ENCODE measurements at regions of chr11 and their contacts with region 1.

Region 1: DNA sequence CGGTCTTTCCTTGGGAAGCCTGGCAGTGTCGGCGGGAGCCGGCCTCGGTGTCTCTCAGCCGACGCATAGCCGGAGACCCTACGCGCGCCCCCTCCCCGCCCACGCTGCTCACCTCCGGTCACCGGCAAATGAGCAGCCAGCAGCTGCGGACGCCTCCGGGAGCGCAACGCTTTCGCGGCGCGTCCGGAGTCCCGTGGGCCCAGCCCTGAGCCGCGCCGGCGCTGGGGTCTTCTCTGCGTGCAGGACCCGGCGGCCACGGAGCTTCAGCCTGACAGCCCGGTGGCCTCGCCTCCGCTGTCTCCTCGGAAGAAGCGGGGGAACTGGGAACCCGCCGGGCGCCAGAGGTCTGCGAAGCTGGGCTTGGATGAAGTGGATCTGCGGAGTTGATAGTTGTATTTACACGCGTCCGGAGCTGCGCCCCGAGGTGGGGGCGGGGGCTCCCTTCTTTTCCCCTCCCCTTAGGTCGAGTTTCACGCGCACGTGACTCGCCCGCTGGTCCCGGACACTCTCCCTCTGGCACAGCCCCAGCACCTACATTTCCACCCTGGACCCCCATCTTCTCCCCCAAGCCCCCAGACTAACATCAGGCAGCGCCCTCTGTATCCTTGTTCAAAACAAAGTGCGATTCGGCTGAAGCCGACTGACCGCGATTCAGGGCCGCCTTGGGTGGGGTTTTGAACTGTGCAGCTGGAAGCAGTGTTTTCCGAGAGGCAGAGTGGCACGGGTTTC is at the start of gene SLC43A1:
- DNase-seq: peak; percentile 69
- H3K4me3 ChIP-seq: peak within 1 kb of the TSS; percentile 64 to 79 (median 68)
- H3K27ac ChIP-seq: no peak within 1 kb of the TSS
- H3K4me1 ChIP-seq: peaks cover 9% of the 10 kb centered on the region
- H3K27me3 ChIP-seq: no peaks in the 10 kb centered on the region
- CTCF ChIP-seq: no peak
- POLR2A ChIP-seq: peak; percentile 25
- total RNA-seq, gene SLC43A1: 11.3 and 13.7 TPM in 2 replicates

Region 2: GRCh38 chr11:57499413-57499982 is 16.0 kb before region 1 on chr11:
- CTCF ChIA-PET with region 1: interaction called, 166 read pairs
- POLR2A ChIA-PET with region 1: interaction called, 4 read pairs
- dilution Hi-C with region 1: no loop called
- intact Hi-C with region 1: loop called (anchors 1 kb)
- DNase-seq: peak; percentile 97
- H3K4me3 ChIP-seq: peak overlapping the region in 2 of 3 experiments; percentile 3 to 22
- H3K27ac ChIP-seq: no peak overlapping the region
- H3K4me1 ChIP-seq: peaks cover 7% of the 10 kb centered on the region
- H3K27me3 ChIP-seq: no peaks in the 10 kb centered on the region
- CTCF ChIP-seq: no peak
- POLR2A ChIP-seq: peak; percentile 13

Region 3: GRCh38 chr11:57556061-57556460 is 40.6 kb after region 1 on chr11:
- CTCF ChIA-PET with region 1: no interaction called
- POLR2A ChIA-PET with region 1: no interaction called
- dilution Hi-C with region 1: no loop called
- intact Hi-C with region 1: no loop called
- DNase-seq: no peak
- H3K4me3 ChIP-seq: no peak overlapping the region
- H3K27ac ChIP-seq: no peak overlapping the region
- H3K4me1 ChIP-seq: no peaks in the 10 kb centered on the region
- H3K27me3 ChIP-seq: no peaks in the 10 kb centered on the region
- CTCF ChIP-seq: no peak
- POLR2A ChIP-seq: no peak